Lower leg skin (tissue), 4 donors: ENCODE measurements at regions of chr6 and their contacts with region 1.

Region 1: GRCh38 chr6:7452891-7453290 is 63.3 kb downstream of the RIOK1 start:
- DNase-seq: no peak
- H3K4me3 ChIP-seq: no peak overlapping the region
- CTCF ChIP-seq: no peak
- POLR2A ChIP-seq: no peak

Region 2: DNA sequence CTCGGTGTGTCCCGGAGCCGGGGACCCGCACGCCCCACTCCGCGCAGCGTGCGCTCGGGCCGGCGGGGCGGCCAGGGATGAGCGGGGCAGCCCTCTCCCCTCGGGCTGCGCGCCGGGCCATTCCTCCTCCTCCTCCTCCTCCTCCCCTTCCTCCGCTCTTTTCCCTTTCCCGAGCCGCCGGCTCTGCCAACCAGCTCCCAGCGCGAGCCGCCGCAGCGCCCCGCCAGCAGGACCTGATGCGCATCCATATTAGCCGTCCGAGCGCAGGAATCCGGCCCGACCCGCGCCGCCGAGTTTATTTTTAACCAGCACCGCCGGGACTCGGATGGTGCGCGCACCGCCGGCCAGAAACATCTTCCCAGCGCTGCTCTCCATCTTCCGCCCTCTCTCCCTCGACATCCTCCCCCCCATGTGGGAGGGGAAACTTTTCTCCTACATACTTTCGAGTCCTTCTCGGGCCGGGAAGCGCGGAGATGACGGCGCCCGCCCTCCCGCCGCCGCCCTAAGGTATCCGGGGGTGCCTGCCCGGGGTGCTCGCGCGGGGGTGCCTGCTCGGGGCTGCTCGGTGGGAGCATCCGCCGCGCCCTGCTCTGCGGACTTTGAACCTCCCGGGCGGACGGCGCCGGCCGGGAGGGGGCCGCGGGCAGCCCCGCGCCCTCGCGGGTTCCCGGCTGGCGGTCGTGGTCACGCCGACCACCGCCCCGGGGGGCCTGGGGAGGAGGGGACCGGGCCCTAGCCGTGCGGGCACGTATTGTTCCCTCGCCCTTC is 344.5 kb before region 1 on chr6:
- intact Hi-C with region 1: no loop called
- DNase-seq: peak; percentile 48 to 93
- H3K4me3 ChIP-seq: peak overlapping the region; percentile 83
- CTCF ChIP-seq: no peak
- POLR2A ChIP-seq: no peak

Region 3: GRCh38 chr6:7439228-7439627 is 13.7 kb before region 1 on chr6:
- intact Hi-C with region 1: loop called (anchors 1 kb)
- DNase-seq: peak in 1 of 2 donors; percentile 23
- H3K4me3 ChIP-seq: no peak overlapping the region
- CTCF ChIP-seq: no peak
- POLR2A ChIP-seq: no peak

Region 4: GRCh38 chr6:8102122-8102958 is 649.4 kb after region 1 on chr6 and contains the start of gene EEF1E1:
- intact Hi-C with region 1: no loop called
- DNase-seq: peak; percentile 94 to 98
- H3K4me3 ChIP-seq: peak within 1 kb of the TSS; percentile 65
- CTCF ChIP-seq: no peak
- POLR2A ChIP-seq: no peak
- total RNA-seq, gene EEF1E1: 11.1 to 39.4 (median 17.9) TPM

Region 5: DNA sequence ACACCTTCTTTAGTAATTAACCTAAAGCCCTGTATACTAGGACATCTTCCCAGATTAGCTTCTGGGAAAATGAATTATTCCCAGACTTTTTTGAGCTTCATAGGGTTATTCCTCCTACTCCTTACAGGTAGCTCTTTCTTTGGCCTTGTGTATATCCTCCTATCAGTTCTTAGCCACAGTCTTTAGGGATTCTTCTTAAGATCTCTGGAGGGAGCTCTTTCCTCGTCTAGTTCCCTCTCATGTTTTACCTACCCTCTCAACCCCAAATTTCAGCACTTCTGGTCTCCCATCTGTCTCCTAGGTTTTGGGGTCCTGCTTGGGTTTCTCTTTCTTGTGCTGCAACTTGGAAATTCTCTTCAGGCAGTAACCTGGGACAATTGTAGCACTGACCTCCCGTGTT is 1028.8 kb after region 1 on chr6:
- intact Hi-C with region 1: no loop called
- DNase-seq: no peak
- H3K4me3 ChIP-seq: no peak overlapping the region
- CTCF ChIP-seq: no peak
- POLR2A ChIP-seq: no peak